ENCODE measurements at regions of chr3 and their contacts with region 1.

Region 1: GRCh38 chr3:49165771-49166751 is at the start of gene CCDC71:
- DNase-seq: peak; percentile 43
- H3K4me3 ChIP-seq: peak within 1 kb of the TSS; percentile 78 to 91 (median 91)
- H3K27ac ChIP-seq: peak within 1 kb of the TSS; percentile 27
- H3K4me1 ChIP-seq: peaks cover 16% of the 10 kb centered on the region
- H3K27me3 ChIP-seq: no peaks in the 10 kb centered on the region
- CTCF ChIP-seq: no peak
- total RNA-seq, gene CCDC71: 22.3 to 25.7 TPM

Region 2: DNA sequence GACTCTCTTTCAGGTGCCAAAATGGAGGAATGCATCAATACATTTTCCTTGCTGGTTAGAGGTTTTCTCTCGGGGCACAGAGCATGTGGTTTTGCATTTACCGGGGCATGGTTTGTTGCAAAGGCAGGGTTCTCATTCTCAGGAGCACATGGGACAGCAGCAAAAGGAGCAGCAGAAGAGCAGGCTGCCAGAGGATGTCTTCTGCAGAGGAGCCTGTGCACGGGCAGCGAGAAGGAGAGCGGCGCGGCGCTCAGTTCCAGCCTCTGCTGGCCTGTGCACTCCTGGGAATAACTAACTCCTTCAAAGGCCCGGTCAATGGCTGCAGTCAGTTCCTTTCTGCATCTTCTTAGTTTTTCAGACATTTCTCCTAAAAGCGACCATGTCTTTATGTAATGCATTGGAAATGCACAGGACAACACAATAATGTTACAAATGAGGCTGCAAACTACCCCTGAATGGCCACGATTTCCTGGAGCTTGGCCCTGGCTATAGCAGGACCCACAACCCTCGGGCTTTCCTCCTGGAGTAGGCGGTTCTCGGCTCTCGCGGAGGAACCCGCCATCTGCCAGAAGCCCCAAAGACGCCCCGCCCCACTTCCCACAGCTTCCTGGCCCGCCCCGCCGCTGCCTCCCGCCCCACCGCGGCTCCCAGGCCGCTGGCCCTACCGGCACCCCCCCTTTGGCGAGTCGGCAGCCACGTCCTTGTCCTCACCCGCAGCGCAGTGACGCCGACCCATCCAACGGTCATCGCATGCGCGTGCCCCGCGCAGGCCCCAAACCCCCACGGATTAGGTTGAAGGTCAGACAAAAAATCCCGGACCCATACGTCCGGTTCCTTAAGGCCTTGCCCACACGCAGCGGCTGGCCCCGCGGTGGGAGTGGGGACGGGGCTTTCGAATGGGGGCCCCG is 110.7 kb after region 1 on chr3 and contains the start of gene C3orf62:
- CTCF ChIA-PET with region 1: interaction called, 7 read pairs
- dilution Hi-C with region 1: no loop called
- in situ Hi-C with region 1: loop called in 1 of 2 experiments (anchors 10 kb)
- intact Hi-C with region 1: loop called (anchors 2 kb)
- DNase-seq: peak; percentile 54
- H3K4me3 ChIP-seq: peak within 1 kb of the TSS; percentile 25 to 53 (median 25)
- H3K27ac ChIP-seq: no peak within 1 kb of the TSS
- H3K4me1 ChIP-seq: peaks cover 14% of the 10 kb centered on the region
- H3K27me3 ChIP-seq: no peaks in the 10 kb centered on the region
- CTCF ChIP-seq: no peak
- total RNA-seq, gene C3orf62: 2.3 to 5.7 TPM

Region 3: DNA sequence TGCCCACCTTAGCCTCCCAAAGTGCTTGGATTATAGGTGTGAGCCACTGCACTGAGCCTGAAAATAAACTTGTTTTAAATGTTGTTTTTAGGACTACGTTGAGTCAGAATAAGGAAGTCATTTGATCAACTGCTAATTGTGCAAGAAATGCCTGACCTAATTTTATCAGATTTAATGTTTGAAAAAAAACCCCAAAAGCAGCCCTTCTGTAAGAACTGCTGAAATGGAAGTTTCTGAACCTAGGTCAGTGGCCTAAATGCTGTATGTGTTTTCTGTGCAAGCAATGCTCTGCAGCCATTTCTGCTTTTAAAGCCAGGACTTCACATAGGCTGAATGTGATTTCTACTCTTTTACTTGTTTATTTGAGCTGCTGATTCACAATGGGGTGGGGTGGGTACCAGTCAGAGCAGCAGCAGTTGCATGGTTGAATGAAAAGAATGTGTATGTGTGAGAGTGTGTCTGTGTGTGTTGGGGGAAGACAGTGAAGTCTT is 185.5 kb after region 1 on chr3:
- CTCF ChIA-PET with region 1: no interaction called
- dilution Hi-C with region 1: no loop called
- in situ Hi-C with region 1: no loop called
- intact Hi-C with region 1: no loop called
- DNase-seq: peak; percentile 83
- H3K4me3 ChIP-seq: no peak overlapping the region
- H3K27ac ChIP-seq: peak overlapping the region; percentile 5
- H3K4me1 ChIP-seq: peaks cover 38% of the 10 kb centered on the region
- H3K27me3 ChIP-seq: no peaks in the 10 kb centered on the region
- CTCF ChIP-seq: no peak

Region 4: DNA sequence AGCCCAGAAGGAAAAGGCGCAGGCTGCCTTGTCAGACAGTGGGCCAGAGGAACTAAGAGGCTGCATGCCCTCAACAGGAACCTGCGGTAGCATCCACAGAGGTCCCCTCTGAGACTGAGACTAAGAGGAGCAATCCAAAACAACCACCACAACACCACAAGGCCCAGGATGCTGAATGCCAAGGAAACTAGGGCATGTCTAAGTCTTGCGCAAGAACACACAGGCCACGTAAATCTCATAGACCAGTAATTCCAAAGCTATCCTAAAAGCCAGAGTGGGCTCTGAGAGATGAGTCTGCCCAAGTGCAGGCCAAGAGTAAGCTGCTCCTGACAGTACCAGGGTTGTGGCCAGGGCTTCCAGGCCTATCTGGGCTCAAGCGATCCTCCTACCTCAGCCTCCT is 750.6 kb after region 1 on chr3:
- CTCF ChIA-PET with region 1: no interaction called
- dilution Hi-C with region 1: no loop called
- in situ Hi-C with region 1: no loop called
- intact Hi-C with region 1: no loop called
- DNase-seq: no peak
- H3K4me3 ChIP-seq: no peak overlapping the region
- H3K27ac ChIP-seq: no peak overlapping the region
- H3K4me1 ChIP-seq: no peaks in the 10 kb centered on the region
- H3K27me3 ChIP-seq: no peaks in the 10 kb centered on the region
- CTCF ChIP-seq: no peak